Activated naive CD4-positive, alpha-beta T cell treated with anti-CD3 and anti-CD28 coated beads for 36 hours (primary cell): ENCODE measurements at regions of chr10 and their contacts with region 1.

Region 1: DNA sequence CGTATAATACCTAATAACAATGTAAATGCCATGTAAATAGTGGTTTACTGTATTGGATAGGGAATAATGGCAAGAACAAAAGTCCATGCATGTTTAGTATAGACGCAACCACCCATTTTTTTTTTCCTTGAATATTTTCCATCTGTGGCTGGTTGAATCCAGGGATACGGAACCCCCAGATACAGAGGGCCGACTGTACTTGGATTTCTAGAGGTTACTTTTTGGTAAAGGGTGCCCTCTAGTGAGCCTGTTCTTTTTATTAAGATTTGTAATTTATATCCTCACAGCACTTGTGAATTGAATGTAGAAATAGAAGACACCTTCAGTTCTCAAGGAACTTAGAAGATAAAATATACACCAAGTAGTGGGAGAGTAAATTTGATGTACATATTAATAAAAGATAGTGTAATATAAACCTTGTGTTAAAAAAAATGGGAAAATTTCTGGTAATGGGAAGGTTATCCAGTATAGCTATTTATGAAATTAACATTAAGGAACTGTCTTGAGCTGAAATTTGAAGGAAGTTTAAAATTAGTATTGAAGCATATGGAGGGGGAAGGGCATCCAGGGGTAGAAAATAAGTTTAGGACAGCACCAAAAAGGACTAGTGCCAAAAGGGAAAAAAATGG is 32.0 kb downstream of the EXOC6 start:
- DNase-seq: no peak
- H3K4me3 Mint-ChIP-seq: no peak overlapping the region
- H3K27ac Mint-ChIP-seq: no peak overlapping the region
- H3K4me1 Mint-ChIP-seq: peaks cover 18% of the 10 kb centered on the region
- H3K27me3 Mint-ChIP-seq: no peaks in the 10 kb centered on the region

Region 2: DNA sequence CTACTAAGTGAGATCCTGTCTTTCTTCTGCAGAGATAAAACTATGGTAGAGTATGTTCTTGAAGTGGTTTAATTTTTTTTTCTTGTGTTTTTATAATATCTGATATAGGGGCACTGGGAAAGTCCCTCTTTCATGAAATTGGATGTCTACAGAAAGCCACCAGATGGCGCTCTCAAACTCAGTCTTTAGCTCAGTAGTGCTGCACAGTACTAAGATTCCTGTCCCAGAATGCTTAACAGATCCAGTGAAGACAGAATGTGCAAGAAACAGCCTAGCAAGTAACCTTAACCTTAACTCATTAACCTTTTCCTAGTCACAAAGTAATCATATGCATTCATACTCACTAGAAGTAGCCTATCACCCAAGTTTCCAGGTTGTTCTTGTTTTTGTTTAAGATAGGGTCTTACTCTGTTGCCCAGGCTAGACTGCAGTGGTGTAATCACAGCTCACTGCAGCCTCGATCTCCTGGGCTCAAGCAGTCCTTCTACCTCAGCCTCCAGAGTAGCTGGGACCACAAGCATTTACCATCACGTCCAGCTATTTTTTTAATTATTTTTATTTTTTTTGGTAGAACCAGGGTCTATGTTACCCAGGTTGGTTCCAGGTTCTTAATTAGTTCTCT is 363.2 kb before region 1 on chr10:
- CTCF ChIA-PET with region 1: no interaction called
- intact Hi-C with region 1: loop called (anchors 1 kb)
- DNase-seq: peak; percentile 78
- H3K4me3 Mint-ChIP-seq: no peak overlapping the region
- H3K27ac Mint-ChIP-seq: no peak overlapping the region
- H3K4me1 Mint-ChIP-seq: peaks cover 6% of the 10 kb centered on the region
- H3K27me3 Mint-ChIP-seq: no peaks in the 10 kb centered on the region

Region 3: GRCh38 chr10:92848441-92849233 is 31.7 kb before region 1 on chr10 and contains the start of gene EXOC6:
- CTCF ChIA-PET with region 1: interaction called, 19 read pairs
- intact Hi-C with region 1: loop called (anchors 1 kb)
- DNase-seq: peak; percentile 86
- H3K4me3 Mint-ChIP-seq: peak within 1 kb of the TSS; percentile 88
- H3K27ac Mint-ChIP-seq: peak within 1 kb of the TSS; percentile 61
- H3K4me1 Mint-ChIP-seq: peaks cover 24% of the 10 kb centered on the region
- H3K27me3 Mint-ChIP-seq: no peaks in the 10 kb centered on the region
- total RNA-seq, gene EXOC6: 7.6 to 9.3 TPM

Region 4: GRCh38 chr10:92965314-92965713 is 85.0 kb after region 1 on chr10:
- CTCF ChIA-PET with region 1: interaction called, 8 read pairs
- intact Hi-C with region 1: loop called (anchors 1 kb)
- DNase-seq: no peak
- H3K4me3 Mint-ChIP-seq: no peak overlapping the region
- H3K27ac Mint-ChIP-seq: no peak overlapping the region
- H3K4me1 Mint-ChIP-seq: no peaks in the 10 kb centered on the region
- H3K27me3 Mint-ChIP-seq: no peaks in the 10 kb centered on the region

Region 5: GRCh38 chr10:93039721-93040120 is 159.4 kb after region 1 on chr10:
- CTCF ChIA-PET with region 1: no interaction called
- intact Hi-C with region 1: loop called (anchors 1 kb)
- DNase-seq: peak; percentile 26
- H3K4me3 Mint-ChIP-seq: no peak overlapping the region
- H3K27ac Mint-ChIP-seq: no peak overlapping the region
- H3K4me1 Mint-ChIP-seq: no peaks in the 10 kb centered on the region
- H3K27me3 Mint-ChIP-seq: no peaks in the 10 kb centered on the region

Region 6: DNA sequence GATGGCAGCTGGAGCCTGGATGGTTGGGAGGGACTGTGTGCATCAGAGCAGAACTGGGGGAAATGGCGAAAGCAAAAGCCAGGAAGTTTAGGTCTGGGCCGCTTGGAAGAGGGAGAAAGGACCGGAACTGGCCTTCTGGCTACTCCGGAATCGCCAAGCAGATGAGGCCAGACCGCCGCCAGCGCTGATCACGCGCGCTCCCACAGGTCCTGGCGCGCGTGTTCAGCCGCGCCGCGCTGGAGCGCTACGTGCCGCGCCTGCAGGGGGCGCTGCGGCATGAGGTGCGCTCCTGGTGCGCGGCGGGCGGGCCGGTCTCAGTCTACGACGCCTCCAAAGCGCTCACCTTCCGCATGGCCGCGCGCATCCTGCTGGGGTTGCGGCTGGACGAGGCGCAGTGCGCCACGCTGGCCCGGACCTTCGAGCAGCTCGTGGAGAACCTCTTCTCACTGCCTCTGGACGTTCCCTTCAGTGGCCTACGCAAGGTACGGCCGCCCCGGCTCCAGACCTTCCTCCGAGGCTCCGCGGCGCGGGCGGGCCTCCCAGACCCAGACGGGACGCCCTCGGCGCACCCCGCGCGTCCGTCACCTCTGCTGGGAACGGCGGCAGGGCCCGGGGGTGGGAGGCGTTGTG is 182.3 kb after region 1 on chr10:
- CTCF ChIA-PET with region 1: no interaction called
- intact Hi-C with region 1: loop called (anchors 2 kb)
- DNase-seq: peak; percentile 64
- H3K4me3 Mint-ChIP-seq: peak overlapping the region; percentile 66
- H3K27ac Mint-ChIP-seq: no peak overlapping the region
- H3K4me1 Mint-ChIP-seq: peaks cover 22% of the 10 kb centered on the region
- H3K27me3 Mint-ChIP-seq: peaks cover 55% of the 10 kb centered on the region

Region 7: DNA sequence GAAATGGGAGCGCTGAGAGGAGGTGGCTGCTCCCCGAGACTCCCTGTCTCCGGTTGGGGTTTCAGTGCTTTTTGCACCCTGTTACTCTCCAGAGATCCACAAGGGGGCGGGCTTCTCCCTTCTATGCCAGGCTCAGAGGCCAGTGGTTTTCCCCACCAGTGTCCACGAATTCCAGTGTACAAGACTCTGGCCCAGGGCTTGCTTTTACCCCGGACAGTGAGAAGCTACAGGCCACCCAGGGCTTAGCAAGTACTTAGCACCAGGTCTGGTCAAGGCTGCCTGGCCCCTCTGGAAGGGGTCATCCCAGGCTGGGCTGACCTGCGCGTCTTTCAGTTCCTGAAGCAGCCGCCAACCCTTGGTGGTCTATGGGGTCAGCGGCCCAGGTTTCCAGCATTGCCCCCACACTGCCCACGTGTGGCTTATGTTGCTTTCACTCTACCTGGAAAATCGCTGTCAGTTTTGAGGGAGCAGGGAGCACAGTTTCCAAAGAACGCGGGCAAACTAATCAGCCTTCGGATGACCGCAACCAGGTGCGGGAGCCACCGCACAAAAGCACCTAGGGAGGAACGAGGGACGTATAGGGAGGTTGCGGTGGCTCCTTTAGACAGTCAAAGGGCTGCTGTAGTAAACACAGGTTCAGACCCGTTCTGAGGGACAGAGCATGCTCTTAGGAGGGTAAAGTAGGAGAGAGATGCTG is 200.2 kb after region 1 on chr10:
- CTCF ChIA-PET with region 1: no interaction called
- intact Hi-C with region 1: no loop called
- DNase-seq: peak; percentile 70
- H3K4me3 Mint-ChIP-seq: no peak overlapping the region
- H3K27ac Mint-ChIP-seq: no peak overlapping the region
- H3K4me1 Mint-ChIP-seq: peaks cover 6% of the 10 kb centered on the region
- H3K27me3 Mint-ChIP-seq: peaks cover 38% of the 10 kb centered on the region

Region 8: DNA sequence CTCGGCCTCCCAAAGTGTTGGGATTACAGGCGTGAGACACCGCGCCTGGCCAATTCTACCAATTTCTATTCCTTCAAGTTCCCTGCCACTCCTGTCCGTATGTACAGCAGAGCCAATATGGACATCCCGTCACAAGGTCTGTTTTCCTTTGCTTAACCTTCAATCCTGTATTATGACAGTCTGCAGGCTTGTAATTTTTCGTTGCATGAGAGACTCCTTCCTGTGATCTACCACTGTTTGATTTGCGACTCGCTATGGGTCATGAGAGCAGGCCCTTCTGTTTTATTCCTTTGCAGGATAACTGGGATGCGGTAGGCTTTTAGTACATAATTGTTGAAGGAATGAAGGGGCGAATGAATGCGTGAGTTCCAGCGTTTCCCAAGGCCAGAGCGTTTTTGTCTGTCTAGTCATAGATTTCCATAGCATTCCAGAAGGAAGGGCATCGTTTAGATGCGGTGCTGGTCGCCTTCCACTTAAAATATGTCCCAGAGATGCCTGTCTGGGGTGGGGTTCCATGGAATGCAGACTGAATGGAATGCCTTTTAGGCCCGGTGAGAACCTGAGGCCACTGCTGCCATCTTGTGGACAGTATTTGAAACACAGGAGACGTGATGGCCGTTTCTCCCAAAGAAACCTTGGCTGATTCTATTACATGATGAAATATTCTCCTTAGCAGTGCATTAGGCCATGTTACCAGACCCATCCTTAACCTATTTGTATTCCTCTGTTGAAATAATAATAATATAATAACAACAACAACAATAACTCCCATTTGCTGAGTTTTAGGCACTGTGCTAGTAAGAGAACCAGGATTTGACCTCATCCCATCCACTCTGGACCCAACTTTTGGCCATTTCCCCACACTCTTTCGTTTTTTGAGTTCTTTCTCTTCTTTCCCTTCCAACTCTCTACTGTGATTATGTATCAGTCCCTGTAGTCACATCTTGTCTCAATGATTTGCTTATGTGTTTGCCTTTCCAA is 408.6 kb after region 1 on chr10:
- CTCF ChIA-PET with region 1: interaction called, 3 read pairs
- intact Hi-C with region 1: loop called (anchors 1 kb)
- DNase-seq: peak; percentile 73
- H3K4me3 Mint-ChIP-seq: no peak overlapping the region
- H3K27ac Mint-ChIP-seq: peak overlapping the region; percentile 10
- H3K4me1 Mint-ChIP-seq: no peaks in the 10 kb centered on the region
- H3K27me3 Mint-ChIP-seq: no peaks in the 10 kb centered on the region